Mammary epithelial cell (primary cell): ENCODE measurements at regions of chr13 and their contacts with region 1.

Region 1: GRCh38 chr13:33069365-33069764 is 53.1 kb downstream of the KL start:
- DNase-seq: no peak
- H3K4me3 ChIP-seq: no peak overlapping the region
- H3K27ac ChIP-seq: no peak overlapping the region
- H3K4me1 ChIP-seq: no peaks in the 10 kb centered on the region
- H3K27me3 ChIP-seq: no peaks in the 10 kb centered on the region
- CTCF ChIP-seq: peak in 1 of 2 donors; percentile 43

Region 2: DNA sequence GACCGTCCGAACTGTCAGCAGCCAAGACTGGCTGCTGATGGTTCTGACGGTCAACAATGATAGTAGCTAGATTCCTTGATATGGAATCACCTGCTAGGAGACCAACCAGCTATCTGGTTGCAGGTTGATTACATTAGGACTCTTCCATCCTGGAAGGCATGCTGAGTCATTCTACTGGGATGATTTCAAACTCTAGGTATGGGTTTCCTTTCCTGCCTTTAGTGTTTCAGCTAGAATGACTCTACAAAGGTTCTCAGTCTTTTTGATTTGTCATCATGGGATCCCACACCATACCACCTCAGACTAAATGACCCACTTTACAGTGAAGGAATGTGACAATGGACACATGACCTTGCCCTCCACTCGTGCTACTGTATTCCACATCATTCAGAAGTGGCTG is 191.2 kb before region 1 on chr13:
- CTCF ChIA-PET with region 1: no interaction called
- dilution Hi-C with region 1: no loop called
- in situ Hi-C with region 1: no loop called
- intact Hi-C with region 1: no loop called
- DNase-seq: peak; percentile 71
- H3K4me3 ChIP-seq: no peak overlapping the region
- H3K27ac ChIP-seq: no peak overlapping the region
- H3K4me1 ChIP-seq: peaks cover 13% of the 10 kb centered on the region
- H3K27me3 ChIP-seq: no peaks in the 10 kb centered on the region
- CTCF ChIP-seq: no peak

Region 3: GRCh38 chr13:33312150-33312860 is 242.9 kb after region 1 on chr13:
- CTCF ChIA-PET with region 1: no interaction called
- dilution Hi-C with region 1: no loop called
- in situ Hi-C with region 1: no loop called
- intact Hi-C with region 1: loop called (anchors 5 kb)
- DNase-seq: peak; percentile 36
- H3K4me3 ChIP-seq: no peak overlapping the region
- H3K27ac ChIP-seq: no peak overlapping the region
- H3K4me1 ChIP-seq: no peaks in the 10 kb centered on the region
- H3K27me3 ChIP-seq: no peaks in the 10 kb centered on the region
- CTCF ChIP-seq: peak in 1 of 2 donors; percentile 45